ENCODE measurements at regions of chrX and their contacts with region 1.

Region 1: DNA sequence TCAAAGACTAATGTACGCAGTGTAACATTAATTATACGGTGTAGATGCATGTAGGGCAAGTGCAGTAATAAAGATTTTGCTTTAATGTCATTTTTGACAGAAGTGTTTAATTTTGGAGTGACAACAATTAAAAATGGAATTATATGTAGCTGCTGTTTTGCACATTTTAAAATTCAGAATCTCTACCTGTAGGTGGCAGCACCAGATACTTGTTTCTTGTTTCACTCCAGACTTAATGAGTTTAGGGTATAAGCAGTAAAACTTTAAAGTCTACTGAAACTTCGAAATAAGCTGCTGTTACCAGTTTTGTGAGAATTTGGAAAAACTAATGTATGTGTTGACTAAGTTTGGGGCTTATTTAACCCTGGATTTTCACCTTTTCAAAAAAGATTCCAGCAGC is 144.9 kb downstream of the POLA1 start:
- DNase-seq: peak in 2 of 35 experiments; percentile 4 to 35
- ATAC-seq: no peak
- H3K4me3 ChIP-seq: no peak overlapping the region
- H3K4me3 Mint-ChIP-seq: no peak overlapping the region
- H3K27ac ChIP-seq: no peak overlapping the region
- H3K27ac Mint-ChIP-seq: no peak overlapping the region
- H3K4me1 ChIP-seq: no peaks in the 10 kb centered on the region
- H3K4me1 Mint-ChIP-seq: no peaks in the 10 kb centered on the region
- H3K27me3 ChIP-seq: no peaks in the 10 kb centered on the region
- H3K27me3 Mint-ChIP-seq: no peaks in the 10 kb centered on the region

Region 2: DNA sequence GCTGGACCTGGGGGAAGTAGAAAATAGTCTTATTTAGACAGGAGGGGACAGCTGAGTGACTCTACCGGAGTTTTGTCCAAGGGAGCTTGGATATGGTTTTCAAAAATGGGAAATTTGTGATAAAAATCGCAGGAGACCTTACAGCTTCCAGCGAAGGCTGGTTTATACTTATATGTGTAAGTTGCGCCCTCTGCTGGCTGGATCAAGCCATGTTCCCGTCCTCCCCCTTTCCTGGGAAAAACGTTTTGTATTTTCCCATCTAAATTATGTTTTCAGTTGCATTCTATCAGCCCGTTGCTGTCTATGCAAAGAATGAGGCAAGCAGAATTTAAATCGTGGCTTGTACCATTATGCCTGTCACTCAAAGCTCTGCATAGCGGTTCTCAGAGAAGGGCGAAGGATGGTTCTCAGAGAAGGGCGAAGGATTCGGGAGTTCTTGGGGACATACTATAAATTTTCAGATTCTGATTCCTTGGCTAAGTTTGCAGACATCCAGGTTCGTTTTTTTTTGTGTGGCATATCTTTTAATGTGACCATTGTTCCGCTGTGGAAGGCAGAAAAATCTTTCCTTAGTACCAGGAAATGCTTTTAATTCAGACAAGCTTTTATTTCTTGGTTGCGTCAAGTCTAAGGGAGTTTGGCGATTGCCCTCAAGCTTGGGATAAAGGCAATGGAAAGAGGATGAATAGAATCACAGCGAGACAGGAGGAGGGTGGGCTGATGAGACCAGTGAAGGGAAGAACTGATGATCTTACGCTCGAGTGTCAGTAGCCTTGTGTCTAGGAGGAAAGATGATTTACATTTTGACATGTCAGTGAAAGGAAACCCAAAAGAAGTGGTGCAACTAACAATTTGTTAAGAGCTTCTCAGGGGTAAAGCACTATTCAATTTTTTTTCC is 305.7 kb after region 1 on chrX:
- CTCF ChIA-PET with region 1: interaction called, 11 to 23 read pairs
- POLR2A ChIA-PET with region 1: no interaction called
- DNase-seq: peak in 20 of 35 experiments; percentile 3 to 54 (median 10)
- ATAC-seq: no peak
- H3K4me3 ChIP-seq: no peak overlapping the region
- H3K4me3 Mint-ChIP-seq: no peak overlapping the region
- H3K27ac ChIP-seq: no peak overlapping the region
- H3K27ac Mint-ChIP-seq: no peak overlapping the region
- H3K4me1 ChIP-seq: no peaks in the 10 kb centered on the region
- H3K4me1 Mint-ChIP-seq: no peaks in the 10 kb centered on the region
- H3K27me3 ChIP-seq: peaks cover 0 to 3% of the 10 kb centered on the region in 2 experiments
- H3K27me3 Mint-ChIP-seq: peaks cover 3 to 29% of the 10 kb centered on the region in 2 donors